PC-3 (cell line): ENCODE measurements at regions of chr1 and their contacts with region 1.

Region 1: DNA sequence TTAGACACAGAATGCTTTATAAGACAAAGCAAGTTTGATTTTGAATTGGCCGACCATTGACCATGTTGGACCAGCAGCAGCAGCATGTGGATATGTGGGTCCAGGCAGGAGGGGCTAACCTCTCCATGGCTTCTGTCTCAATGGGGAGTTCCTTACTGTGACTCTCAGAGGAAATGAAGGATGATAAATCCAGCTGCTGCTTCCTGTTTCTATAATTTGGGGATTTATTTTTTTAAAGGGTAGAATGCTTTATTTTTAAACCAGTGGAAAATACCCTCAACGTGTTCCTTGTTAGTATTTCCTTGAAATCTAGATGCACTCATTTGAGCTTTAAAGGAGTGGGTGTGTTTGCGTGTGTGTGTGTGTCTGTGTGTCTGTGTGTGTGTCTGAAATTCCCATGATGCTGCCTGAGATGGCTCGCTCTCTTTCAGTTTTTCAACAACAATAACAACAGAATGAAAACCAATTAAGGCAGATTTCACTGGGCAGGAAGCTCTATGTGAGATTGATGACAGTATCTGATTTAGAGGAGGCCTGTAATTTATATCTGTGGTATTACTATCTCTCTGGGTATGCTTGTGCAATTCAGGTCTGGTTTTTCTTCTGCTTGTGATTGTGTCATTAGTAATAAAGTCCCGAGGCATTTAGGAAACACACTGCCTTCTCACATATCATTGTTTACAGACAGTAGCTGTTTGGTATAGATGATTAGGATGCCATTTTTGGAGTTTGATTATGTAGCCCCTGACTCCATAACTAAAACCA is 86.1 kb upstream of the ZNF326 start:
- DNase-seq: peak; percentile 63
- ATAC-seq: no peak
- H3K4me3 ChIP-seq: no peak overlapping the region
- H3K27ac ChIP-seq: peak overlapping the region; percentile 89
- H3K4me1 ChIP-seq: peaks cover 53% of the 10 kb centered on the region
- H3K27me3 ChIP-seq: no peaks in the 10 kb centered on the region
- CTCF ChIP-seq: no peak

Region 2: DNA sequence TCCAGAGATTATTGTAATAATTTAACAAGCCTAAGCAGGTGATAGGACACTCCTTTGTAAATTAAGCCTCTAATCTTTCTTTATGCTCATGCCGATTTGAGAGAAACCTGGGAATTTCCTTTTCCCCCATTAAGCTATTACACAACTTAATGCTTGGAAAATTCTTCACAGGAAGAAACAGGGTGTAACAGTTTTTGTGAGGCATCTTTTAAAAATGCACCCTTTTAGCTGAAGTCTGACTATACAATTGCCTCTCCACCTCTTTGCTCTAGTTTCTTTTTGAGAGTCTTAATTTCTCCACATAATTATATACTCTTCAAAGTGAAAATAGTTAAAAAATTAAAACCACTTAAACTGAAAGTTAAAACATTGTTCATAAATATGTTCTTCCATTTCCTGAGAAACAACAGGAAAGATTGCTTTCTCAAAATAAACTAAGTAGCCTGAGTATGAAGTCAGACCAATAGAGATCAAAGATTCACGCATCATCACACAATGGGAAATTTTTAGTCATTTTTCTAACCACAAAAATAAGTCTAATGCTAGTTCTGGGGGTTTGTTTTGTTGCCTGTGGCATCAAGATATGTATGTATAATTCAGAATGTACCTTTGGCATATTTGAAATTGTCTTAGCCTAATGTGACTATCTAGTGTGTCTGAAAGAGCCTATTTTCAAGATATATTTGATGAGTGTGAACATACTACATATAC is 53.3 kb before region 1 on chr1:
- CTCF ChIA-PET with region 1: no interaction called
- POLR2A ChIA-PET with region 1: no interaction called
- intact Hi-C with region 1: loop called (anchors 5 kb)
- DNase-seq: peak; percentile 51
- ATAC-seq: no peak
- H3K4me3 ChIP-seq: no peak overlapping the region
- H3K27ac ChIP-seq: peak overlapping the region; percentile 43
- H3K4me1 ChIP-seq: peaks cover 18% of the 10 kb centered on the region
- H3K27me3 ChIP-seq: no peaks in the 10 kb centered on the region
- CTCF ChIP-seq: no peak

Region 3: DNA sequence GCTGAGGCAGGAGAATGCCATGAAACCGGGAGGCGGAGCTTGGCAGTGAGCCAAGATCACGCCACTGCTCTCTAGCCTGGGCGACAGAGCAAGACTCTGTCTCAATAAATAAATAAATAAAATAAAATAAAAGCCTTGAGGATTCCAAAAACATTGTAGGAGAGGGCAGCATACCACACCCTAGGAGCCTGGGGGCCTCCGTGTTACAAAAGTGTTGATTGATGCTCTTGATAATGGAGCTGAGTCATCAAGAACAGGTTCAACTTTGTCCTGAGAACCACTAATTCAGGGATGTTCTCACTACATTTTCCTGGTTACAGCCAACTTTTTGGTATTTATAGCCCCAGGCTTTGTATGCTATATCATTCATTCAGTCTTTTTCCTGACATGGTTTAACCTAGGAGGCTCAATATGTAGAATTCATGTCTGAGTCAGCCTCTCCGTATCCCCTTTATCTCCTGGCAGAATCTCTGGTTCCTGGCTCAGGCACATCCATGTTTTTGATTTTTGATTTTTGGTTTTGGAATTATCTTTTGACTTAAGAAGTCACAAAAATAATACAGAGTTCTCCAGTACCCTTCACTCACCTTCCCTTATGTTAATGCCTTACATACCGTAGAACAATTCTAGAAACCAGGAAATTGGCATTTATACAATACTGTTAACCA is 18.6 kb before region 1 on chr1:
- CTCF ChIA-PET with region 1: no interaction called
- POLR2A ChIA-PET with region 1: no interaction called
- intact Hi-C with region 1: loop called (anchors 2 kb)
- DNase-seq: peak; percentile 99
- ATAC-seq: peak; percentile 68
- H3K4me3 ChIP-seq: peak overlapping the region; percentile 17; the same call in 1 of the 2 replicates
- H3K27ac ChIP-seq: peak overlapping the region; percentile 94
- H3K4me1 ChIP-seq: peaks cover 57% of the 10 kb centered on the region
- H3K27me3 ChIP-seq: no peaks in the 10 kb centered on the region
- CTCF ChIP-seq: no peak

Region 4: DNA sequence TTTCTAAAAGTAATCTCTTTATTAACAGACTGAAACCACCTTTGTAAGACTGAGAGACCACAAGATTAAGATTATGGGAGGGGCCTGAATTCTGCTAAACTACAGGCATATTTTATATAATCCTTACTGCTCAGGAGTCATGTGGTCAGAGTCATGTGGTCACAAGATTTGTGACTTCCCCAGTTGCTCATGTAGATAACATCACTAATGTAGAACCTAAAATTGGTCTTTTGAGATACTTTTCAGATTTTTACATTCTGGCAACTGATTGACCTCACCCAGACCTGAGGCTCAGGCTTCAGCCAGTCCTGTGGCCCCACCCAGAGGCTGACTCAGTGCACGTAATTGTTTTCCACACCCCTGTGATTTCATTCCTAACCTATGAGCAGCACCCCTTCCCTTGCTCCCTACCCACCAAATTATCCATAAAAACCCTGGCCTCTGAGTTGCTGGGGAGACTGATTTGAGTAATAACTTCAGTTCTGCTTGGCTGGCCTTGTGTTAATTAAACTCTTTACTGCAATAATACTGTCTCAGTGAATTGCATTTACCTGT is 44.3 kb after region 1 on chr1:
- CTCF ChIA-PET with region 1: interaction called, 4 read pairs
- POLR2A ChIA-PET with region 1: no interaction called
- intact Hi-C with region 1: loop called (anchors 5 kb)
- DNase-seq: peak; percentile 95
- ATAC-seq: peak; percentile 96
- H3K4me3 ChIP-seq: no peak overlapping the region
- H3K27ac ChIP-seq: peak overlapping the region; percentile 78
- H3K4me1 ChIP-seq: peaks cover 39% of the 10 kb centered on the region
- H3K27me3 ChIP-seq: no peaks in the 10 kb centered on the region
- CTCF ChIP-seq: peak; percentile 34; the same call in 1 of the 2 replicates

Region 5: DNA sequence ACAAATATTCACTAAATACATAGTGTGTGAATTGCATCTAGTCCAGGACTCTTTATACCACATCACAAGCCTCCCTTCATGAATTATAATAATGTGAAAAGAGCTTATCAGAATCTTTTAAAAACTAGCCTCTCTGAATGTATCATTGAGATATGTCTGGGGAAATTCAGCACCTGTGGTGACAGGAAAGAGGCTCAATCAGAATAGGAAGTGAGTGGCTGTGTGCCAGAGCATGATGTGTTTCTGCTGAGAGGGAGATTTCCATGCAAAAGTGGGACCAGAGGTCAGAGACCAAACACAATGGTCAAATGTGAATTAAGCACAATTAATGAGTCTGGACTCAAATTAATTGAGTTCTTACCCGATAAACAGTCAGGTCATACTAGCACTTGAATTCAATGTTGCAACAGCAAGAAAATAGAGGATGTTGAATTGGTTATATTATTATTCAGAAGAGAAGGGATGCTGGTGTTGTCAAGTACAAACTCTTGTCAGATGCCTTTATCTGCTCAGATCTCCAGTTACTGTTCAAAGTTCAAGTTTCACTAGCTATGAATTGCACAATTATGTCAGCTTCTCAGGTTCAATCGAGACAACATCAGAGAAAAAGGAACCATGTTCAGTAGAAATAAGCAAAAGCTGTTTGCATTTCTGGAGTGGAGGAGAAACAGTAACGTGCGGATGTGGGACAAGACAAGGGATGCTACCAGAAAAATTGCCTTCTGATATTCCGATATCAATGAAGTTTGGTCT is 312.3 kb after region 1 on chr1:
- CTCF ChIA-PET with region 1: no interaction called
- POLR2A ChIA-PET with region 1: no interaction called
- intact Hi-C with region 1: no loop called
- DNase-seq: no peak
- ATAC-seq: no peak
- H3K4me3 ChIP-seq: no peak overlapping the region
- H3K27ac ChIP-seq: no peak overlapping the region
- H3K4me1 ChIP-seq: no peaks in the 10 kb centered on the region
- H3K27me3 ChIP-seq: peaks cover 10% of the 10 kb centered on the region; the same call in 1 of the 2 replicates
- CTCF ChIP-seq: no peak